ENCODE measurements at regions of chr12 and their contacts with region 1.

Region 1: GRCh38 chr12:113152835-113153814 is 3.6 kb downstream of the CFAP73 start:
- DNase-seq: peak; percentile 80 to 84
- H3K4me3 ChIP-seq: peak overlapping the region in 1 of 3 donors; percentile 26
- H3K27ac ChIP-seq: no peak overlapping the region
- H3K4me1 ChIP-seq: peaks cover 17 to 26% of the 10 kb centered on the region in 2 donors
- H3K27me3 ChIP-seq: no peaks in the 10 kb centered on the region
- CTCF ChIP-seq: peak in 4 of 6 experiments; percentile 45 to 70 (median 52)
- POLR2A ChIP-seq: no peak

Region 2: DNA sequence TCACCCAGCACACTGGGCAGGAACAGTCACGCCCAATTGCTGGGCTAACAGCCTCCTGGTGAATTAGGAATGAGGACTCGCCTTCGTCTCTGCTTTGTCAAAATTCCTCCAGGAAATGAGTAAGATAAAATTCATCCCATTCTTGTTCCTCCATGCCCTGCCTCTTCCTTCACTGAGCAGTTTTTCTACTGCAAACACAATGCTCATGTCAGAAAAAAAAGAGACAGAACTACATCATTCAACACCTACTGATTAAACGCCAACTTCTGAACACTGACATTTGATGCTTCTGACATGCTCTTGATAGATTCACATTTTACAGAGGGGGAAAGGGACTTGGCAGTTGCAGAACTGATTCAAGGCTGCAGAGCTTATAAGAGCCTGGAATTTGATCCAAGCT is 134.1 kb before region 1 on chr12:
- intact Hi-C with region 1: no loop called
- DNase-seq: no peak
- H3K4me3 ChIP-seq: no peak overlapping the region
- H3K27ac ChIP-seq: no peak overlapping the region
- H3K4me1 ChIP-seq: no peaks in the 10 kb centered on the region
- H3K27me3 ChIP-seq: no peaks in the 10 kb centered on the region
- CTCF ChIP-seq: no peak
- POLR2A ChIP-seq: no peak

Region 3: DNA sequence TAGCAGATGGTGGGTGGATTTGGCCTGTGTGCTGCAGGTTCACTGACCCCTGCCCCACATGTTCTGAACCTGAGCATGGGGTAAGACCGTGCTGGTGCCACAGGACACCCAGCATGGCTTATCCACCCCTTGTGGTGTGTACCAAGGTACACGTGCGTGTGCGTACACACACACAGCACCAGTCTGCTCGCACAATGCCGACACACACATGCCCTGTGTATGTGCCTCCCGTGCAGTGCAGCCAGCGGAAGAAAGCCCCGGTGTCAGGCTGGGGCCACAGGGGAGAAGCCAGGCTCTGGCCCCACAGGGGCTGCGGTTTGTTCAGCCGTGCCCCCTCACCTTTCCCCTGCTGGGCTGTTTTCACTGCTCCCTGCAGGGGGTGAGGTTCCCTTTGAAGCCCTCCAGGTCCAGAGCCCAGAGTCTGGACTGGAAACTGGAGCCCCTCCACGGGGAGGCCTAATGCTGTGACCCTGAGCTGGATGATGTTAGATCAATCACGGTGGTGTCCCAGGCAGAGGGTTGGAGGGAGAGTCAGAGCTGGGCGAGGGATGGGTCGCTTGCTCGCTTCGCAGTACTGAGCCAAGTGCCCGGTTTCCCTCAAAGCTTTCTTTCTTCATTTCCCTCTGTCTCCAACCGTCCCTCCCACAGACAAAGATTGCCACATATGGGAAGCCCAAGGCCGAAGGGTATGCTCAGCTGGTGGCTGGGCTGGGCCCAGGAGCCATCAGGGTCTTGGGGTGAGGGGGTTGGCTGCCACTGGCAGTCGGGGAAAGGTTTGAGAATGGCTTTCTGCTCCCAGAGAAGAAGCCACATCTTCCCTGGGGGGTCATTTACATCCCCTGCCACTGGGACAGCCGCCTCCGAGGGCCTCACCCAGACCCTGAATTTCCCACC is 90.4 kb before region 1 on chr12:
- intact Hi-C with region 1: no loop called
- DNase-seq: no peak
- H3K4me3 ChIP-seq: no peak overlapping the region
- H3K27ac ChIP-seq: no peak overlapping the region
- H3K4me1 ChIP-seq: no peaks in the 10 kb centered on the region
- H3K27me3 ChIP-seq: no peaks in the 10 kb centered on the region
- CTCF ChIP-seq: no peak
- POLR2A ChIP-seq: no peak

Region 4: DNA sequence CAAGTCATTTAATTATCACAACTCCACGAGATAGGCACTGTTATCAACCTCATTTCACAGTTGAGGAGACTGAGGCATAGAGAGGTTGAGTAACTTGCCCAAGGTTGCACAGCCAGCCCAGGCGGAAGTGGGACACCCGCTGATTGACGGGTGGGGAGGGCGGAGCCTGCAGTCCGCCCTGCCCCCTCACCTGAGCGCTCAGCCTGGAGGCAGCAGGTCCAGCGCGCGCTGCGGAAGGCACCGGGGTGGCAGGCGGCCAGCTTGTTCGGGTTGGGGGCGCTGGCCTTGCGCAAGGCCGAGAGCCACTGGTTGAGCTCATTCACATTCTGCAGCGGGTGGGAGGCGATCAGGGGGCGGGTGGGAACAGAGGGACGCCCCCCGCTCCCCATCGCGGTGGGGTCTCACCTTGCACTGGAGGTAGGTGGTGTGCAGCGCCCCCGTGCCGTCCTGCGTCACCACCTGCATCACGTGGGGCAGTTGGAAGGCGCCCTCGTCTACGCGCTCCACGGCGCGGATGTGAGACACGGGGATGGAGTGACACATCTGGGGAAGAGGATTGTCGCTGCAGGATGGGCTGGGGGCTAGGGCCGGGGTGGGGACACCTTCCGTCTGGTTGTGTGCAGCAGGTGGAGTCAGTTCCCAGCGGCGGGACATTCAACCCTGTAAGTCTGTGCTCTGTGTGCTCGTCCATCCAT is 49.2 kb before region 1 on chr12:
- intact Hi-C with region 1: loop called (anchors 10 kb)
- DNase-seq: peak; percentile 72 to 75
- H3K4me3 ChIP-seq: no peak overlapping the region
- H3K27ac ChIP-seq: no peak overlapping the region
- H3K4me1 ChIP-seq: peaks cover 9 to 11% of the 10 kb centered on the region in 2 donors
- H3K27me3 ChIP-seq: no peaks in the 10 kb centered on the region
- CTCF ChIP-seq: no peak
- POLR2A ChIP-seq: no peak

Region 5: DNA sequence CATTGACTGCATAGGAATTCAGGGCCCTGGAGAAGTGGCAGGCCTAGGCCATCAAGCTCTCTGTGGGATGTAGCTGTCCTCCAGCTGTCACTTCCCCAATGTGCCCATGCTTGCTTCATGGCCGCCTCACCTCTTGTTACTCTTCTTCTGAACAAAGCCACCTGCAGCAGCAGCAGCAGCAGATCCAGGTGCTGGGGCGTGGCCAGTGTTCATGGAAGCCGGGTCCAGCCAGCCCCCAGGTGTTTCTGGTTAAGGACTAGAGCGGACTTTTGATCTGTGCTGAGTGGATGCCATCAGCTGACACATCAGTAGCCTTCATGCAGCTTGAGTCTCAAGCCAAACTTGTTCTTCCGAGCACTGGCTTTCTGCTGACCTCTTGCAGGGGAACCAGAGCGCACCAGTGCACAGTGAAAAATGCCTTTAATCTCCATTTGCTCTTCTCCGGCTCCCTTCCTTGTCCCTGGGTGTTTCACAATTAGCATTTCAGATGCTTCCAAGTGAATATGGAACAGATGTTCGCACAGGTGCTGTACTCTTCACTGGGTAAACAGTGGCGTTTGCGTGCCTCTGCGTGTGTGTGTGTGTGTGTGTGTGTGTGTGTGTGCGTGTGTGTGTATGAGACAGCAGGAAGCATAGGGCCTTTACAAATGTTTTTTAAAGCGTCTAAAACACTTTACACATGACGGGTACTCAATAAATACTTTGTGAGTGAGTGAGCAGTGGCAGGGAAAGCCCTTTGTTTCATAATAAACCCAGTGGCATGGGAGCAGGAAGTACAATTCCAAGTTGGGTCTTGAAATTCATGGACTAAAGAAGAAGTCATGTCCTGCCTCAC is 88.3 kb after region 1 on chr12:
- intact Hi-C with region 1: no loop called
- DNase-seq: peak; percentile 94 to 95
- H3K4me3 ChIP-seq: no peak overlapping the region
- H3K27ac ChIP-seq: peak overlapping the region; percentile 94 to 98 (median 96)
- H3K4me1 ChIP-seq: peaks cover 96 to 97% of the 10 kb centered on the region in 2 donors
- H3K27me3 ChIP-seq: no peaks in the 10 kb centered on the region
- CTCF ChIP-seq: no peak
- POLR2A ChIP-seq: no peak

Measured in thyroid gland (tissue), 4 donors.